GM13976 (cell line): ENCODE measurements at regions of chr10 and their contacts with region 1.

Region 1: DNA sequence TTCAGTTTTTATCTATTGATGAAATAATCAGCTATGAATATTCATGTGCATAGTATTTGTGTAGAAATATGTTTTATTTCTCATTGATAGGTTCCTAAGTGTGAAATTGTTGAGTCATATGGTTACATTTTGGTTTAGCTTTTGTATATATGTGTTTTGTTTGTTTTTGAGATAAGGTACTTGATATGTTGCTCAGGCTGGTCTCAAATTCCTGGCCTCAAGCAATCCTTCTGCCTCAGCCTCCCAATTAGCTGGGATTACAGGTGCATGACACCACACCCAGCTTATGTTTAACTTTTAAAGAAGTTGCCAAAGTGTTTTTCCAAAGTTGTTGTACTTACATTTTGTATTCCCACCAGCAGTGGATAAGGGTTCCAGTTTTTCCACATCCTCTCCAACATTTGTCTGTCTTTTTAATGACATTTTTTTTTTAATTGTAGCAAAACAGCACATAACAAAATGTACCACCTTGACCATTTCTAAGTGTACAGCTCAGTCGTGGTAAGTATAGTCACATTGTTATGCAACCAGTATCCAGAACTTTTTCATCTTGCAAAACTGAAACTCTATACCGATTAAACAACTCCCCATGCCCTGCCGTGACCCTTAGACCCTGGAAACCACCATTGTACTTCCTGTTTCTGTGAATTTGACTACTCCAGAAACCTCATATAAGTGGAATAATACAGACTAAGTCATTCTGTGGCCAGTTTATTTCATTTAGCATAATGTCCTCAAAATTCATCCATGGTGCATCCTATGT is 12.6 kb upstream of the UBE2D1 start:
- DNase-seq: no peak
- CTCF ChIP-seq: no peak

Region 2: GRCh38 chr10:58755677-58756076 is 433.4 kb after region 1 on chr10:
- in situ Hi-C with region 1: loop called (anchors 25 kb)
- DNase-seq: peak; percentile 5
- CTCF ChIP-seq: no peak